IMR-90 (cell line): ENCODE measurements at regions of chr16 and their contacts with region 1.

Region 1: GRCh38 chr16:66406534-66407221 is 20.4 kb upstream of the BEAN1 start:
- DNase-seq: peak; percentile 49
- ATAC-seq: peak; percentile 88
- H3K4me3 ChIP-seq: peak overlapping the region; percentile 49
- H3K27ac ChIP-seq: no peak overlapping the region
- H3K4me1 ChIP-seq: peaks cover 6% of the 10 kb centered on the region
- H3K27me3 ChIP-seq: peaks cover 17% of the 10 kb centered on the region
- CTCF ChIP-seq: peak; percentile 93
- POLR2A ChIP-seq: no peak
- RAD21 ChIP-seq: peak; percentile 94

Region 2: DNA sequence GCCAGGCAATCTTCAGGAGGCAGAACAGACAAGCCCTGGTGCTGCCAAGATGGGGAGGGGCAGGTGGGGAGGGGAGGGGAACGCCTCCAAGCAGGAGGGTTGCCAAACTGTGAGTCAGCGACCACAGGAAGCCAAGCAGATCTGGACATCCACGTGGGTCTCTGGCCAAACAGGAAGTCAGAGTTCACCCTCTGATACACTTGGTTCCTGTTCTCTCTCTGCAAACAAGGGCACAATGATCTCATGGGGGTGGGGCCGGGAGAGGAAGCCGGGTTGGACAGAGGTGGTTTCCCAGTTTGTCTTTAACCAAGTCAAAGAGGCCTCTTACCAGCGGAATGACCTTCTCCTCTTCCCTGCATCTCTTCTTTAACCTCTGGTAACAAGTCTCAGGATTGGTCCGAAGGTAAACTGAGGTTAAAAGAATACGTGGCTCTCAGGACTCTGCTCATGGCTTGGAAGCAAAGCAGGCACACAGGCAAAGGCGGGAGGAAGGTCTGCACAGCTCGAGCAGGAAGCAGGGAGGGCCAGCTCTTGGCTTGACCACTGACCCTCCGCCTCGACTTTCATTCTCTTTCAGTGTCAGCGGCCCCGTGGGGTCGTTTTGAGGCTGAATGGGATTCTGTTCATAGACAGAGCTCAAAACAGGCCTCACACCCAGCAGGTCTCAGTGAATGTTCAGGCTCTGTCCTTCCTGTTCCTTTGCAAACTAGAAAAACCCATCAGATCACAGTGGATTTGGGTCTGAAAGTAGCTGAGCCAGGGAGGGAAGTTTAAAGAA is 110.3 kb after region 1 on chr16:
- CTCF ChIA-PET with region 1: interaction called, 3 read pairs
- POLR2A ChIA-PET with region 1: no interaction called
- dilution Hi-C with region 1: no loop called
- in situ Hi-C with region 1: no loop called
- intact Hi-C with region 1: loop called (anchors 1 kb)
- DNase-seq: peak; percentile 99
- ATAC-seq: peak; percentile 95
- H3K4me3 ChIP-seq: no peak overlapping the region
- H3K27ac ChIP-seq: peak overlapping the region; percentile 95
- H3K4me1 ChIP-seq: peaks cover 36% of the 10 kb centered on the region
- H3K27me3 ChIP-seq: no peaks in the 10 kb centered on the region
- CTCF ChIP-seq: no peak
- POLR2A ChIP-seq: no peak
- RAD21 ChIP-seq: 0 out of 2 replicates have a peak, but pooled peaks have one; percentile 5

Region 3: DNA sequence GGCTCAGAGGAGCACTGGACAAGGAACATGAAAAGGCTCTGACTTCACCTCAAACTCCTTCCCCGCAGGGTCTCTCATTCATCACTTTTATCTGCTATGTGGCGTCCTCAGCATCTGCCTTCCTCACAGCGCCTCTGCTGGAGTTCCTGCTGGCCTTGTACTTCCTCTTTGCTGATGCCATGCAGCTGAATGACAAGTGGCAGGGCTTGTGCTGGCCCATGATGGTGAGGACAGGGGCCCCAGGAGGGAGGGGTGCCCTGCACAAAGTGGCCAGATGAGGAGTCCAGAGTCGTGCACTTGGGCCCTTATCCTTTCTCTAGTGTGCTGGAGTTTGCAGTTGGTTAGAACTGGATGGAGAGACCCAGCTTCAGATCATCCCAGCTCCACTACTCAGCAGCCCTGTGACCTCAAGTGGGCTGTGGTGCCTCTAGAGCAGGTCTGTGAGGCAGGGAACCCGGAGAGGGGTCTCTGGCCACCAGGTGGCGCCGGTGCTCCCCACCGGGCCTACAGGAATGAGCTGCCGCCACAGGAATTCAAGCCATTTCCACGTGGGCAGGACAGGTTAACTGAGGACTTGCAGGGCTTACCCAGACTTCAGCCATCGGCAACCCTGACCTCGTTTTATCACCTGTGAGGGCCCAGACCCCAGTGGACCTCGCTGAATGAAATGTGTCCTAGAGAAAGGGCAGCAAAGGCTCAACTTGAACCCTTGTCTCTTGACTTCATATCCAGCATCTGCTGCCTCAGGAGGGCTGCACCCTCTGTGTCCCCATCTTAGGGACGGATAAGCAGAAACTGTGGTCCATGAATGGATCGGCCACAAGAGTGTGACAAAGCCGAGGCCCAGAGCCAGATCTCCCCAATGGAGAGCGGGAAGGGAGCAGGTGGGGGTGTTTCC is 201.8 kb after region 1 on chr16:
- CTCF ChIA-PET with region 1: interaction called, 3 read pairs
- POLR2A ChIA-PET with region 1: interaction called, 3 read pairs
- dilution Hi-C with region 1: no loop called
- in situ Hi-C with region 1: loop called (anchors 5 kb)
- intact Hi-C with region 1: loop called (anchors 1 kb)
- DNase-seq: peak; percentile 86
- ATAC-seq: peak; percentile 49
- H3K4me3 ChIP-seq: no peak overlapping the region
- H3K27ac ChIP-seq: peak overlapping the region; percentile 19
- H3K4me1 ChIP-seq: peaks cover 21% of the 10 kb centered on the region
- H3K27me3 ChIP-seq: no peaks in the 10 kb centered on the region
- CTCF ChIP-seq: peak; percentile 93
- POLR2A ChIP-seq: no peak
- RAD21 ChIP-seq: peak; percentile 80

Region 4: DNA sequence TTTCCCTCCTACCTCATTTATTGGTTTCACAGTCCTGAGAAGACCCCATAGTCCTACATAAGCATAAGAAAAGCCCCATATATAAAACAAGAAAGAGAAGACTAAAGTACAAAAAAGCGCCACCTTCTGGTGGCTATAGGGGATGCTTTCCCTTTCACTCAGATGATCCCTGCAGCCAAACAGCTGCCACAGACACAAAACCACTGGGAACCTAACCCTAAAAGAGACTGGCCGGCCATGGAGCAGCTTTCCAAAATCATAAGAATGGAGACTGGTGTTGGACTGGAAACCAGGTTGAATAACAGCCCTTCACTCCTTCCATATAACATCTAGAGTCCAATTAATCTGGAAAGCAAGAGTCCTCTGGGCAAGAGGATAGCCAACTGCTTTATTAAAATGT is 333.3 kb after region 1 on chr16:
- CTCF ChIA-PET with region 1: no interaction called
- POLR2A ChIA-PET with region 1: no interaction called
- dilution Hi-C with region 1: no loop called
- in situ Hi-C with region 1: no loop called
- intact Hi-C with region 1: loop called (anchors 10 kb)
- DNase-seq: peak; percentile 32
- ATAC-seq: peak; percentile 45
- H3K4me3 ChIP-seq: no peak overlapping the region
- H3K27ac ChIP-seq: no peak overlapping the region
- H3K4me1 ChIP-seq: peaks cover 14% of the 10 kb centered on the region
- H3K27me3 ChIP-seq: no peaks in the 10 kb centered on the region
- CTCF ChIP-seq: peak; percentile 58
- POLR2A ChIP-seq: no peak
- RAD21 ChIP-seq: no peak; the same call in 1 of the 2 replicates

Region 5: GRCh38 chr16:66872943-66873684 is 466.4 kb after region 1 on chr16:
- CTCF ChIA-PET with region 1: interaction called, 8 read pairs
- POLR2A ChIA-PET with region 1: no interaction called
- dilution Hi-C with region 1: no loop called
- in situ Hi-C with region 1: loop called (anchors 10 kb)
- intact Hi-C with region 1: loop called (anchors 2 kb)
- DNase-seq: peak; percentile 100
- ATAC-seq: peak; percentile 91
- H3K4me3 ChIP-seq: peak overlapping the region; percentile 18
- H3K27ac ChIP-seq: peak overlapping the region; percentile 52
- H3K4me1 ChIP-seq: peaks cover 12% of the 10 kb centered on the region
- H3K27me3 ChIP-seq: no peaks in the 10 kb centered on the region
- CTCF ChIP-seq: peak; percentile 98
- POLR2A ChIP-seq: no peak
- RAD21 ChIP-seq: peak; percentile 69